Psoas muscle (tissue), 8 donors: ENCODE measurements at regions of chr12 and their contacts with region 1.

Region 1: GRCh38 chr12:45290204-45290580 is 74.3 kb downstream of the ANO6 start:
- DNase-seq: no peak
- ATAC-seq: peak; percentile 81 to 92 (median 88)
- H3K4me3 ChIP-seq: no peak overlapping the region
- H3K27ac ChIP-seq: peak overlapping the region; percentile 89
- H3K4me1 ChIP-seq: peaks cover 25% of the 10 kb centered on the region
- H3K27me3 ChIP-seq: no peaks in the 10 kb centered on the region
- CTCF ChIP-seq: no peak

Region 2: DNA sequence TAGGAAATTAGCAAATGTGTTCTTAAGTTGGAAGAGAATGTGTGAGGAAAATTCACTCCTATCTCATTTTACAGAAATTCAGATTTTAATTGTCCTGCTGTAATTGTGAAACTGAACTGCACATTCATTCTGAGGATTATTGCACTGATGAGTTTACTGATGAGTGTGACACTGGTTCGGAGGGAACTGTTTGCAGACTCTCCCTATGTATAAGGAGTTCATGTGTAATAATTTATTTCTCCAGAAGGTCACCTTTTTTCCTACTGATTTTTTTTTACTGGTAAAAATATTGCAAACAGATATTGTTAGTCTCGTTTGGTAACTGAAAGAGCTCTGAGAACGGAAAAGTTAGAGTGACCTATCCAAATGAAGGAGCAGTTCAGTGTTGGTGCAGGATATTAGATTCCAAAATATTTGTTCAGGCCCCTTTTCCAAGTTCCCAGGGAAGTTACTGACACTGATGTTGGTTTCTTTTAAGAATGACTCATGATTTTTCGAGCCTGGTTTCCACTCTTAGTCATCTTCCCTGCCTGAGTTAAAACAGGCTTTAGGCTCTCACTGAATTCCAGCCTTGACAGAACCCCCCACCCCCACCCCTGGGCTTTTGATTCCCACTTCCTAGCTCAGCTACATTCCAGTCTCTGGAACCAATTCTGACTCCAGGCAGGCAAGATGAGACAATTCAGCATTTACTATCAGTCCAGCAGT is 55.9 kb before region 1 on chr12:
- intact Hi-C with region 1: loop called (anchors 5 kb)
- DNase-seq: peak in 1 of 2 donors; percentile 38
- ATAC-seq: peak; percentile 73 to 79 (median 76)
- H3K4me3 ChIP-seq: peak overlapping the region; percentile 37
- H3K27ac ChIP-seq: peak overlapping the region; percentile 98
- H3K4me1 ChIP-seq: peaks cover 56% of the 10 kb centered on the region
- H3K27me3 ChIP-seq: no peaks in the 10 kb centered on the region
- CTCF ChIP-seq: no peak

Region 3: DNA sequence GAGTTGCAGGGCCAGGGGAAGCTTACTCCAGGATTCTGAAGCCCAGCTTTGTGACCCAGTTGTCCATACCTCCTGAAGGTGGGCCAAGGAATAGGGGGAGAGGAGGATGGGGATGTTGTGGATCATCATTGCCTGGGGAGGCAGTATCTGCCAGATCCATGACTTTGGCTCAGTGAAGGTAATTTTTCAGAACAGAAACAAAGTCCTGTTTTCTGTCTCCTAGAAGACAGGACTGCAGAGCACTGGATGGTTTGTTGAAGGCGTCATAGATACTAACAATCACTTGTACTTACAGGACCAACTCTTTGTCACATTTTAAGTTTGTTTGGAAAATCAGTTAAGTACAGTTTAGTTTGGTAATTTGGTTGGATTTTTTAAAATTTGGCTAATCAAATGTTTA is 35.9 kb before region 1 on chr12:
- intact Hi-C with region 1: loop called in 1 of 2 experiments (anchors 5 kb)
- DNase-seq: no peak
- ATAC-seq: no peak
- H3K4me3 ChIP-seq: no peak overlapping the region
- H3K27ac ChIP-seq: no peak overlapping the region
- H3K4me1 ChIP-seq: peaks cover 71% of the 10 kb centered on the region
- H3K27me3 ChIP-seq: no peaks in the 10 kb centered on the region
- CTCF ChIP-seq: no peak

Region 4: DNA sequence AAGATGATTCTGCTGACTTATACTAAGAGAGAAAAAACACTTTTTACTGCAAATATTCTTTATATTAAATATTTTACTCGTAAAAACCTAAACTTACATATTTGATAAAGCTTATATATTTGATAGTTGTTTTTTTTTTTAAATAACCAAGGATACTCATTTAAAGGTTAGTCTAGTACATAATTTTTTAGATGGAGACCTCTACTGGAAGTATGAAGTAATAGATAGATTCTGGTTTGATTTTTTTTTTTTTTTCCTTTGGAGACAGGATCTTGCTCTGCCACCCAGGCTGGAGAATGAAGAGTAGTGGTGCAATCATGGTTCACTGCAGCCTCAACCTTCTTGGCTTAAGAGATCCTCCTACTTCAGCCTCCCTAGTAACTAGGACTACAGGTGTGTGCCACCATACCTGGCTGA is 455.7 kb after region 1 on chr12:
- intact Hi-C with region 1: no loop called
- DNase-seq: no peak
- ATAC-seq: peak in 3 of 4 donors; percentile 34 to 59 (median 51)
- H3K4me3 ChIP-seq: no peak overlapping the region
- H3K27ac ChIP-seq: no peak overlapping the region
- H3K4me1 ChIP-seq: no peaks in the 10 kb centered on the region
- H3K27me3 ChIP-seq: no peaks in the 10 kb centered on the region
- CTCF ChIP-seq: peak; percentile 21